Activated CD8-positive, alpha-beta T cell treated with anti-CD3 and anti-CD28 coated beads for 36 hours (primary cell): ENCODE measurements at regions of chr6 and their contacts with region 1.

Region 1: GRCh38 chr6:133923938-133924593 is 29.0 kb upstream of the TBPL1 start:
- DNase-seq: peak; percentile 76
- ATAC-seq: peak; percentile 82
- H3K4me3 Mint-ChIP-seq: no peak overlapping the region
- H3K27ac Mint-ChIP-seq: no peak overlapping the region
- H3K4me1 Mint-ChIP-seq: no peaks in the 10 kb centered on the region
- H3K27me3 Mint-ChIP-seq: peaks cover 20% of the 10 kb centered on the region
- CTCF ChIP-seq: peak; percentile 89

Region 2: GRCh38 chr6:133587546-133588160 is 336.4 kb before region 1 on chr6:
- CTCF ChIA-PET with region 1: no interaction called
- POLR2A ChIA-PET with region 1: no interaction called
- intact Hi-C with region 1: no loop called
- DNase-seq: no peak
- ATAC-seq: no peak
- H3K4me3 Mint-ChIP-seq: no peak overlapping the region
- H3K27ac Mint-ChIP-seq: no peak overlapping the region
- H3K4me1 Mint-ChIP-seq: no peaks in the 10 kb centered on the region
- H3K27me3 Mint-ChIP-seq: no peaks in the 10 kb centered on the region
- CTCF ChIP-seq: no peak

Region 3: DNA sequence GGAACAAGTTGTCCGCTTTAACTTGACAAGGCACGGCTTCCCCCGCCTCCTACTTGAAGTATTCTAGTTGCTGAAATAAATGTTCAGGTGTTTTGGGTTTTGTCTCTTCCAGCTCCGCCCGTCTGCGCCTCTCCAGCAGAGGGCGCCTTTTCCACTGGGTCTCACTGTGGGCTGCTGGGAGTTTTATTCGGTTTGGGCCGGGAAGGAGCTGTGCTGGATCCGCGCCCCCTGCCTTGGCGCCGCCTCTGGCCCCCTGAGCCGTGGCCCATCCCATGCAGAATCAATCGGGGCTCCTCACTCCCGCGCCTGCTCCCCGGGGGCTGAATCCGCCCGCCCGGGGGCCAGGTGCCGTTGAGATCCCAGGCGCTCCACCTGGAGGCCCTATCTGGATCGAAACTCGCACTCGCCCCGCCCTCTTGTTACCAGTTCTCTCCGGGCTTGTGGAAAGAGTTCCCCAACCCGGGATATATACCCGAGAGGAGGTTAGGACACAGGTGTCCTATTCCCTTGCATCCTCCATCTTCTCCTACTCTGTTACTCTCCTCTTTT is 86.2 kb before region 1 on chr6:
- CTCF ChIA-PET with region 1: interaction called, 13 read pairs
- POLR2A ChIA-PET with region 1: no interaction called
- intact Hi-C with region 1: no loop called
- DNase-seq: peak; percentile 71
- ATAC-seq: peak; percentile 83
- H3K4me3 Mint-ChIP-seq: peak overlapping the region; percentile 61
- H3K27ac Mint-ChIP-seq: no peak overlapping the region
- H3K4me1 Mint-ChIP-seq: peaks cover 6% of the 10 kb centered on the region
- H3K27me3 Mint-ChIP-seq: peaks cover 24% of the 10 kb centered on the region
- CTCF ChIP-seq: peak; percentile 88

Region 4: GRCh38 chr6:133952815-133953633 is 29.0 kb after region 1 on chr6 and contains the start of gene TBPL1:
- CTCF ChIA-PET with region 1: interaction called, 18 read pairs
- POLR2A ChIA-PET with region 1: interaction called, 3 read pairs
- intact Hi-C with region 1: no loop called
- DNase-seq: peak; percentile 96
- ATAC-seq: peak; percentile 91
- H3K4me3 Mint-ChIP-seq: peak within 1 kb of the TSS; percentile 92
- H3K27ac Mint-ChIP-seq: peak within 1 kb of the TSS; percentile 96
- H3K4me1 Mint-ChIP-seq: peaks cover 40% of the 10 kb centered on the region
- H3K27me3 Mint-ChIP-seq: no peaks in the 10 kb centered on the region
- CTCF ChIP-seq: no peak
- total RNA-seq, gene TBPL1: 30.9 to 37.8 TPM

Region 5: GRCh38 chr6:133983099-133983939 is 59.3 kb after region 1 on chr6:
- CTCF ChIA-PET with region 1: interaction called, 16 read pairs
- POLR2A ChIA-PET with region 1: no interaction called
- intact Hi-C with region 1: no loop called
- DNase-seq: peak; percentile 70
- ATAC-seq: peak; percentile 89
- H3K4me3 Mint-ChIP-seq: no peak overlapping the region
- H3K27ac Mint-ChIP-seq: no peak overlapping the region
- H3K4me1 Mint-ChIP-seq: peaks cover 41% of the 10 kb centered on the region
- H3K27me3 Mint-ChIP-seq: no peaks in the 10 kb centered on the region
- CTCF ChIP-seq: no peak

Region 6: DNA sequence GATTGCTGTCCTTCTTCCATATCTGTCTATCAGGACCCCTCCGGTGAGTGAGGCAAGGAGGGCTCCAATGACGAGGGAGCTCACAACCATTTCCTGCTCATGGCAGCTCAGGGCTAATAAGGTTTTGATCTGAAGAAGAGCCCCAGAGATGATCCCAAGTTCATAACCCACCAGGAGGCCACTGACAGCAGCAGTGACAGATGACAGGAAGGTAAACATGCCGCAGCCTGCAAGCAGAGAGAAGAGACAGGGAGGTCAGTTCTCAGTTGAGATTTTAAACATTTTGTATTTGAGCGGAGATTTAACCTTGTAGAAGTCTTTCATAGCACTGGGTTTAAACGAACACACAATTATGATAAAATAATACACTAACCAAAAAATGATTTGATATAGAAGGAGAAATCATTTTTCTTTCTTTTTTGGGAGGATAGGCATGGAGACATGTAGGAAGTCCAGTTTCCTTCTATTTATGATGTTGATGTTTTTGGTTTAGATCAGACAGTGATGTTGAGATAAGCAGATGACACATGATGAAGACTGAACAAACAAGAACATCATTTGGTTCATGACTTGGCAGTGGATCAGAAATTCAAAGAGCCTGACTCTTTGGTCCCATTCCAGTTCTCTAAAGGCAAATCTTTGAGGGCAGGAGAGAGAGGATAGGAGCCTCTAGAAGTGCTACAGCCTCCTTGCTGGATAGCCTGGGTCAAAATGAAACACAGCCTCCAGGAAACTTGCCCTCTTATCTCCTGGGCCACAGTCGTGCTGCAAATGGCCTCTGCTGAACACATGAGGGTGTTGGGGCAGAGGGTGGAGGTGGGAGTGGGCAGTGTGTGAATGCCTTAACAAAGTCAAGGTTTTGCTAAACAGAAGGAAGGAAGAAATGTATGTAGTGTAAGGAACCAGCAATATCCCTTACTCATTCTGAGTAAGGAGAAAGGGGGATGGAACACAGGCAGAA is 105.7 kb after region 1 on chr6:
- CTCF ChIA-PET with region 1: interaction called, 11 read pairs
- POLR2A ChIA-PET with region 1: no interaction called
- intact Hi-C with region 1: no loop called
- DNase-seq: no peak
- ATAC-seq: no peak
- H3K4me3 Mint-ChIP-seq: no peak overlapping the region
- H3K27ac Mint-ChIP-seq: no peak overlapping the region
- H3K4me1 Mint-ChIP-seq: peaks cover 3% of the 10 kb centered on the region
- H3K27me3 Mint-ChIP-seq: no peaks in the 10 kb centered on the region
- CTCF ChIP-seq: no peak

Region 7: GRCh38 chr6:134080171-134080795 is 156.2 kb after region 1 on chr6:
- CTCF ChIA-PET with region 1: interaction called, 30 read pairs
- POLR2A ChIA-PET with region 1: no interaction called
- intact Hi-C with region 1: no loop called
- DNase-seq: peak; percentile 3
- ATAC-seq: no peak
- H3K4me3 Mint-ChIP-seq: no peak overlapping the region
- H3K27ac Mint-ChIP-seq: no peak overlapping the region
- H3K4me1 Mint-ChIP-seq: peaks cover 13% of the 10 kb centered on the region
- H3K27me3 Mint-ChIP-seq: no peaks in the 10 kb centered on the region
- CTCF ChIP-seq: no peak

Region 8: DNA sequence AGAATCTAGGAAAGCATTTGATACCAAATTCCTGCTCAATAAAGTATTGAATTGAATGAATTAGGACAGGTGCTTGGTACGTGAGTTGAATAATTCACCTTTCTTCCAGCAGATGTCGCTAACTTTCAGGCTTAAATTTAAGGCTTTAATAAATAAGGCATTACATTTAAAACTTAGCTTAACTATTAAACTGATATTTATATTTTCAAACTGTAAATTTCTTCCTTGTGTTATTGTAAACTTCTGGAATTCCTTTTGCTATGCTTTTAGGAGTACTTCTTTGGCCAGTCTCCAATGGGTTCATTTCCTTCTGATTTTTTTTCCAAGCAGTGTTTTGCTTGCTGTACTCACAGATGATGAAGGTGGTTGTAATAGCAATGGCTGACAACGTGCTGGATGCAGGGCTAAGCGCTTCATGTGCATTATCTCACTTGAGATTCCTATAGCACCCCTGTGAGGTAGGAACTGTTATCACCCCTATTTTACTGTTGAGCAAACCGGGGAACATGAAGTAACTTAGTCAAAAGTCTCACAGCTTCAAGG is 199.7 kb after region 1 on chr6:
- CTCF ChIA-PET with region 1: interaction called, 20 read pairs
- POLR2A ChIA-PET with region 1: no interaction called
- intact Hi-C with region 1: no loop called
- DNase-seq: peak; percentile 30
- ATAC-seq: peak; percentile 90
- H3K4me3 Mint-ChIP-seq: no peak overlapping the region
- H3K27ac Mint-ChIP-seq: no peak overlapping the region
- H3K4me1 Mint-ChIP-seq: peaks cover 2% of the 10 kb centered on the region
- H3K27me3 Mint-ChIP-seq: no peaks in the 10 kb centered on the region
- CTCF ChIP-seq: peak; percentile 91

Region 9: GRCh38 chr6:134223796-134224420 is 299.8 kb after region 1 on chr6:
- CTCF ChIA-PET with region 1: no interaction called
- POLR2A ChIA-PET with region 1: no interaction called
- intact Hi-C with region 1: no loop called
- DNase-seq: no peak
- ATAC-seq: no peak
- H3K4me3 Mint-ChIP-seq: no peak overlapping the region
- H3K27ac Mint-ChIP-seq: no peak overlapping the region
- H3K4me1 Mint-ChIP-seq: no peaks in the 10 kb centered on the region
- H3K27me3 Mint-ChIP-seq: no peaks in the 10 kb centered on the region
- CTCF ChIP-seq: no peak